ENCODE measurements at regions of chr1 and their contacts with region 1.

Region 1: GRCh38 chr1:45643978-45644377 is 20.1 kb upstream of the CCDC17 start:
- DNase-seq: peak; percentile 43
- ATAC-seq: peak; percentile 95
- H3K4me3 ChIP-seq: no peak overlapping the region
- H3K27ac ChIP-seq: no peak overlapping the region
- H3K4me1 ChIP-seq: no peaks in the 10 kb centered on the region
- H3K27me3 ChIP-seq: no peaks in the 10 kb centered on the region
- CTCF ChIP-seq: peak; percentile 52

Region 2: GRCh38 chr1:44135886-44136285 is 1508.1 kb before region 1 on chr1:
- CTCF ChIA-PET with region 1: no interaction called
- POLR2A ChIA-PET with region 1: no interaction called
- intact Hi-C with region 1: no loop called
- DNase-seq: no peak
- ATAC-seq: no peak
- H3K4me3 ChIP-seq: no peak overlapping the region
- H3K27ac ChIP-seq: no peak overlapping the region
- H3K4me1 ChIP-seq: no peaks in the 10 kb centered on the region
- H3K27me3 ChIP-seq: no peaks in the 10 kb centered on the region
- CTCF ChIP-seq: no peak

Region 3: GRCh38 chr1:45583264-45583665 is 60.7 kb before region 1 on chr1:
- CTCF ChIA-PET with region 1: no interaction called
- POLR2A ChIA-PET with region 1: no interaction called
- intact Hi-C with region 1: no loop called
- DNase-seq: peak; percentile 97
- ATAC-seq: peak; percentile 80
- H3K4me3 ChIP-seq: peak overlapping the region; percentile 91
- H3K27ac ChIP-seq: no peak overlapping the region
- H3K4me1 ChIP-seq: peaks cover 7% of the 10 kb centered on the region
- H3K27me3 ChIP-seq: no peaks in the 10 kb centered on the region
- CTCF ChIP-seq: no peak

Region 4: GRCh38 chr1:45803301-45803780 is 159.4 kb after region 1 on chr1 and contains the start of gene MAST2:
- CTCF ChIA-PET with region 1: no interaction called
- POLR2A ChIA-PET with region 1: no interaction called
- intact Hi-C with region 1: loop called (anchors 5 kb)
- DNase-seq: peak; percentile 90
- ATAC-seq: peak; percentile 79
- H3K4me3 ChIP-seq: peak within 1 kb of the TSS; percentile 73
- H3K27ac ChIP-seq: peak within 1 kb of the TSS; percentile 56
- H3K4me1 ChIP-seq: peaks cover 22% of the 10 kb centered on the region
- H3K27me3 ChIP-seq: no peaks in the 10 kb centered on the region
- CTCF ChIP-seq: no peak
- total RNA-seq, gene MAST2: 29.3 and 33.7 TPM in 2 replicates

Region 5: DNA sequence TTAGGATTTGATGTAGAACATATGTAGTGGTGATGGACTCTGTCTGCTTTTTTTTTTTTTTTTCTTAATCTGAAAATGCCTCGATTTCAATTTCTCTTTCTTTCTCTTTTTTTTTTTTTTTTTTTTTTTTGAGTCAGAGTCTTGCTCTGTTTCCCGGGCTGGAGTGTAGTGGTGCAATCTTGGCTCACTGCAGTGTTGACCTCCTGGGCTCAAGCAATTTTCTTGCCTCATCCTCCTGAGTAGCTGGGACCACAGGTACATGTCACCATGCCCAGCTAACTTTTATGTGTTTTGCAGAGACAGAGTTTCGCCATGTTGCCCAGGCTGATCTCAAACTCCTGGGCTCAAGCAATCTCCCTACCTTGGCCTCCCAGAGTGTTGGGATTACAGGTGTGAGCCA is 176.8 kb after region 1 on chr1:
- CTCF ChIA-PET with region 1: no interaction called
- POLR2A ChIA-PET with region 1: interaction called, 21 read pairs
- intact Hi-C with region 1: no loop called
- DNase-seq: no peak
- ATAC-seq: no peak
- H3K4me3 ChIP-seq: no peak overlapping the region
- H3K27ac ChIP-seq: no peak overlapping the region
- H3K4me1 ChIP-seq: peaks cover 3% of the 10 kb centered on the region; the same call in 1 of the 2 replicates
- H3K27me3 ChIP-seq: no peaks in the 10 kb centered on the region
- CTCF ChIP-seq: no peak

Measured in PC-3 (cell line).